Common myeloid progenitor, CD34-positive (primary cell): ENCODE measurements at regions of chr14 and their contacts with region 1.

Region 1: GRCh38 chr14:67359775-67360648 is at the starts of genes ATP6V1D and EIF2S1:
- DNase-seq: peak; percentile 99 to 100 (median 99)
- H3K4me3 ChIP-seq: peak within 1 kb of the TSS; percentile 81 to 99 (median 94)
- H3K27ac ChIP-seq: peak within 1 kb of the TSS; percentile 99 to 100
- H3K4me1 ChIP-seq: peaks cover 15 to 36% (median 22%) of the 10 kb centered on the region in 4 experiments
- H3K27me3 ChIP-seq: no peaks in the 10 kb centered on the region

Region 2: GRCh38 chr14:67221248-67221981 is 138.6 kb before region 1 on chr14:
- CTCF ChIA-PET with region 1: no interaction called
- POLR2A ChIA-PET with region 1: no interaction called
- DNase-seq: no peak
- H3K4me3 ChIP-seq: no peak overlapping the region
- H3K27ac ChIP-seq: no peak overlapping the region
- H3K4me1 ChIP-seq: no peaks in the 10 kb centered on the region
- H3K27me3 ChIP-seq: no peaks in the 10 kb centered on the region

Region 3: DNA sequence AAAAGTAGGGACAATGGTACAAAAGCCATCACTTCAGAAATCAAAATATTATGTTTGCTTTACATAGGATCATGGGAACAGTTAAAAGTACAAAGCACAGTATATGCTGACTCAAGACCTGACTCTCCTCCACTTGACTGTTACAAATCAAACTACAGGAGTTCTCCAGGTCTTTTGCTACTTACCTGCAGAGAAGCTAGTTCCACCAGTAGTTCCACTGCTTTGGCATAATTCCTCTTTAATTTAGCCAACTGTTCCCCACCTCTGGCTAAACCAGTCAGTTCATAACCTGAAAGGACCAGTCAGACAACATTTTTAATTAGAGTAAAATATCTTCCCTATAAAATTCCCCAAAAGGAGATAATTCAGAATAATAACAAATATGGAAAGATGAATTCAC is 14.4 kb before region 1 on chr14:
- CTCF ChIA-PET with region 1: interaction called, 11 read pairs
- POLR2A ChIA-PET with region 1: no interaction called
- DNase-seq: no peak
- H3K4me3 ChIP-seq: no peak overlapping the region
- H3K27ac ChIP-seq: no peak overlapping the region
- H3K4me1 ChIP-seq: no peaks in the 10 kb centered on the region
- H3K27me3 ChIP-seq: no peaks in the 10 kb centered on the region

Region 4: DNA sequence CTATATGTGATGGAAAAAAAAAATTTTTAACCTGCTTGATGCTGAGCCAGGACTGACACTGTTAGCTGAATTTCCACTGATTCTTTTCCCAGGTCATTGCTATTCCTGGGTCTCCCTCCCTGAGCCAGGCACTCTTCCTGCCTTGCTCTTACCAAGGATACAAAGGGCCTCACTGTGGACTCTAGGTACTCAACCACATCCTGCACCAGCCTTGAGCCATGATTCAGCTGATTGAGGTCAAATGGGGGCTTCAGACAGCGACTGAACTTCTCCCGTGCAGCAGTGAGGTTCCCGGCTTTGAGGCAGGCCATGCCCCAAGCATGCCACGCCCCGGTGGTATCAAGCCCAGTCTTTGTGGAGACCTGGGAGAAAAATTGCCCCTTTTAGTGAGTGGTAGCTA is 402.0 kb after region 1 on chr14:
- CTCF ChIA-PET with region 1: no interaction called
- POLR2A ChIA-PET with region 1: no interaction called
- DNase-seq: peak in 1 of 3 donors; percentile 5
- H3K4me3 ChIP-seq: no peak overlapping the region
- H3K27ac ChIP-seq: no peak overlapping the region
- H3K4me1 ChIP-seq: peaks cover 0 to 3% (median 0%) of the 10 kb centered on the region in 4 experiments
- H3K27me3 ChIP-seq: no peaks in the 10 kb centered on the region